ENCODE measurements at regions of chr4 and their contacts with region 1.

Region 1: GRCh38 chr4:1726146-1726934 is 5.0 kb downstream of the TACC3 start:
- DNase-seq: peak; percentile 91
- H3K4me3 ChIP-seq: no peak overlapping the region
- H3K27ac ChIP-seq: peak overlapping the region in 3 of 4 donors; percentile 1 to 47 (median 47)
- H3K4me1 ChIP-seq: peaks cover 0 to 24% (median 15%) of the 10 kb centered on the region in 4 donors
- H3K27me3 ChIP-seq: no peaks in the 10 kb centered on the region
- CTCF ChIP-seq: peak; percentile 84 to 97 (median 91)
- EP300 ChIP-seq: no peak
- POLR2A ChIP-seq: no peak

Region 2: DNA sequence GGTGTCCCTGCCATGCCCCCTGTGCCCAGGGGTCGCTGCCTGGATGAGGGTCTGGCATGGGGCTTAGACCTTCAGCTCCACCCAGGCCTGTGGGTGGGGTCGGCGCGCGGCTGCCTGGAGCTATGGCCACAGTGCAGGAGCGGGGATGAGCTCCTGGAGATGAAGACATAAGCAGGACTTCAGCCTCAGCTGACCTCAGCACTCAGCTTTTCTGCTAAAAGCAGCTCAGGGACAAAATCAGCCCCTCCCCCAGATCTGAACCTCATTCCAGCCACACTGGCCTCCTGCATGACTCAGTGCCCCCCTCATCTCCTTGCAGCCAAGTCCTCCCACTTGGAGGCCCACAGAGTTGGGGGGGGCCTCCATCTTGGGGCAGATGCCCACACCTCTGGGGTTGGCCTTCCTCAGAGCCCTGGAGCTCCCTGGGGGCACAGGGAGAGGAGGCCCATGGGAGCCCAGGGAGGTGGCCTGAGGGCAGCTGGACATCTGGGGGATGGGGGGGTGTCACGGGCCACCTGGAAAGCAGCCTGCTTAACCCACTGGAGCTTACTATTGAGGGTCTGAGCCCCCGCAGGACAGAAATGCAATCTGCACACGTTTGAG is 881.0 kb before region 1 on chr4:
- intact Hi-C with region 1: no loop called
- DNase-seq: no peak
- H3K4me3 ChIP-seq: no peak overlapping the region
- H3K27ac ChIP-seq: no peak overlapping the region
- H3K4me1 ChIP-seq: no peaks in the 10 kb centered on the region
- H3K27me3 ChIP-seq: no peaks in the 10 kb centered on the region
- CTCF ChIP-seq: no peak
- EP300 ChIP-seq: no peak
- POLR2A ChIP-seq: no peak

Region 3: DNA sequence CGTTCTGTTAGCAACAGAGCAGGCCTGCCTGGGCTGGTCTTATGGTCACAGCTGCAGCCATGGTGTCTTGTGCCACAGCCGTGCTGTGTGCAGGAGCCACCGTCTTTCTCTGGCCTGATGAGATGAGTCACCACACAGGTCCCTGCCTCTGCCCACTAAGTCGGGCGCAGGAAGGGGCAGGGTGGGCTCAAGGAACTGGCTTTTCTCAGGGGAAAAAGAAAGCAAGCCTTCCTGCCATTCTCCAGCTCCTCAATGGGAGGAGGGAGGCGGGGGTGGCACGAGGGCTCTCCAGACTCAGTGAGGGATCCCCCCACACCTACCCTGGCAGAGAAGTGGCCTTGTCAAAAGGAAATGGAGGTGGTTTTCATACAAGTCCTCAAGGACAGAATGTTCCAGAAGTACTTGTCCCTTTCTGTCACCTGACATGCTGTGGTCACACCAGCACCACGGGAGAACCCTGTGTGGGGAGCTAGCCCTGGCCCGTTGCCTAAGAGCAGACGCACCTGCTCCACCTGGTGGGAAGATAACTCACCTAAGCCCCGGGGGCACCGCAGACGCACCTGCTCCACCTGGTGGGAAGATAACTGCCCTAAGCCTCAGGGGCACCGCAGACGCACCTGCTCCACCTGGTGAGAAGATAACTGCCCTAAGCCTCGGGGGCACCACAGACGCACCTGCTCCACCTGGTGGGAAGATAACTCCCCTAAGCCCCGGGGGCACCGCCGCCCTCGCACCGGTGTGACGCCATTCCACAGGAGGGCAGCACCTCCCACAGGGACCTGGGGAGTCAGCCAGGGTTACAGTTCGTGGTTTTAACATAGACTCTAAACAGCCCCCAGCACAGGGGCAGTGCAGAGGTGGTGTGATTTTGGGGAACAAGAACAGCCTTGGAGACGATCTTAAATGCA is 360.8 kb before region 1 on chr4:
- intact Hi-C with region 1: no loop called
- DNase-seq: peak; percentile 15
- H3K4me3 ChIP-seq: no peak overlapping the region
- H3K27ac ChIP-seq: no peak overlapping the region
- H3K4me1 ChIP-seq: no peaks in the 10 kb centered on the region
- H3K27me3 ChIP-seq: no peaks in the 10 kb centered on the region
- CTCF ChIP-seq: no peak
- EP300 ChIP-seq: no peak
- POLR2A ChIP-seq: no peak

Region 4: GRCh38 chr4:1693129-1693896 is 33.0 kb before region 1 on chr4:
- intact Hi-C with region 1: loop called (anchors 1 kb)
- DNase-seq: peak; percentile 88
- H3K4me3 ChIP-seq: no peak overlapping the region
- H3K27ac ChIP-seq: no peak overlapping the region
- H3K4me1 ChIP-seq: no peaks in the 10 kb centered on the region
- H3K27me3 ChIP-seq: no peaks in the 10 kb centered on the region
- CTCF ChIP-seq: peak; percentile 62 to 94 (median 84)
- EP300 ChIP-seq: no peak
- POLR2A ChIP-seq: no peak

Region 5: DNA sequence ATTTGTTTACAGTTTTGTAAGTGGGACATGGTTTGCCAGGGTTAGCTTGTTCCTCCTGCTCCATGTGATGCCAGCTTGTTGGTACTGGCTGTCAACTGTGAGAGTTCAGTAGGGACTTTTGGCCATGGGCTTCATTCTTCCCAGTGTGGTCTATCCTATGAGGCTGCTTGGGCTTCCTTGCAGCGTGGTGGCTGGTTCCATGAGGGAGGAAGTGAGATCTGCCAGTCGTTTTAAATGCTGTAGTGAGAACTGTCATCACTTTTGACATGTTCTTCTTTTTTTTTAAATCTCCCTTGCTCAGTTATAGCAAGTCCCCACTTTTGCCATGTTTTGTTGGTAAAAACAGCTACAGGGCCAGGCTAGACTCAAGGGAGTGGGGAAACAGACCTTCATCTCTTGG is 160.7 kb after region 1 on chr4:
- intact Hi-C with region 1: no loop called
- DNase-seq: no peak
- H3K4me3 ChIP-seq: no peak overlapping the region
- H3K27ac ChIP-seq: no peak overlapping the region
- H3K4me1 ChIP-seq: peaks cover 0 to 5% (median 0%) of the 10 kb centered on the region in 4 donors
- H3K27me3 ChIP-seq: no peaks in the 10 kb centered on the region
- CTCF ChIP-seq: no peak
- EP300 ChIP-seq: no peak
- POLR2A ChIP-seq: no peak

Region 6: GRCh38 chr4:2101346-2102044 is 375.2 kb after region 1 on chr4:
- intact Hi-C with region 1: no loop called
- DNase-seq: no peak
- H3K4me3 ChIP-seq: no peak overlapping the region
- H3K27ac ChIP-seq: no peak overlapping the region
- H3K4me1 ChIP-seq: no peaks in the 10 kb centered on the region
- H3K27me3 ChIP-seq: no peaks in the 10 kb centered on the region
- CTCF ChIP-seq: no peak
- EP300 ChIP-seq: no peak
- POLR2A ChIP-seq: no peak

Measured in sigmoid colon (tissue), 7 donors.